GM23248 (cell line): ENCODE measurements at regions of chr1 and their contacts with region 1.

Region 1: GRCh38 chr1:180527101-180527669 is 24.8 kb upstream of the ACBD6 start:
- DNase-seq: peak; percentile 75
- H3K4me3 ChIP-seq: no peak overlapping the region
- H3K27ac ChIP-seq: no peak overlapping the region
- H3K4me1 ChIP-seq: peaks cover 12% of the 10 kb centered on the region
- H3K27me3 ChIP-seq: no peaks in the 10 kb centered on the region

Region 2: DNA sequence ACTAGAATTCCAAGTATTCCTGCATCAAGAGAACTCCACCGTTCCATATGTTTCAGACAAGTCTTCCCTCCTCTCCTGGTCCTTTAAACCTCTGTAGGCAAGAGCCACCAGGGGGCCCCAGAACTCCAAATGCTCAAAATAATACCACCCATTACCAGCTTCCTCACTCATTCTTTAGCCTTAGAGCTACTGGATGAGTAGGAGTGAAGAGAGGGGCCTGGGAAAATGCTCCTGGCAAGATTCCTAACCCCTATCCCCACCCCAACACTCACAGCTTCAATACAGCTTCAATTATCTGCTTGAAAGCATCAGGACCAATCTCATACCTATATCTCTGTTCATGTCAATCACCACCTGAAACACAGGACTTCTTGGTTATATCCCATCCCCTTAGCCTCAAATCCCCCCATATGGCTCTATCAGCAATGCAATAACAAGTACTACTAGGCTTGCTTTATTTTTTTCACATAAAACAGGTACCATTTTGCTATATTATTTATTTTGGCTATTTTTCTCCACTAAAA is 659.3 kb before region 1 on chr1:
- in situ Hi-C with region 1: no loop called
- DNase-seq: peak; percentile 78
- H3K4me3 ChIP-seq: no peak overlapping the region
- H3K27ac ChIP-seq: no peak overlapping the region
- H3K4me1 ChIP-seq: 0 out of 2 replicates have a peak, but pooled peaks cover 12% of the 10 kb centered on the region
- H3K27me3 ChIP-seq: no peaks in the 10 kb centered on the region

Region 3: DNA sequence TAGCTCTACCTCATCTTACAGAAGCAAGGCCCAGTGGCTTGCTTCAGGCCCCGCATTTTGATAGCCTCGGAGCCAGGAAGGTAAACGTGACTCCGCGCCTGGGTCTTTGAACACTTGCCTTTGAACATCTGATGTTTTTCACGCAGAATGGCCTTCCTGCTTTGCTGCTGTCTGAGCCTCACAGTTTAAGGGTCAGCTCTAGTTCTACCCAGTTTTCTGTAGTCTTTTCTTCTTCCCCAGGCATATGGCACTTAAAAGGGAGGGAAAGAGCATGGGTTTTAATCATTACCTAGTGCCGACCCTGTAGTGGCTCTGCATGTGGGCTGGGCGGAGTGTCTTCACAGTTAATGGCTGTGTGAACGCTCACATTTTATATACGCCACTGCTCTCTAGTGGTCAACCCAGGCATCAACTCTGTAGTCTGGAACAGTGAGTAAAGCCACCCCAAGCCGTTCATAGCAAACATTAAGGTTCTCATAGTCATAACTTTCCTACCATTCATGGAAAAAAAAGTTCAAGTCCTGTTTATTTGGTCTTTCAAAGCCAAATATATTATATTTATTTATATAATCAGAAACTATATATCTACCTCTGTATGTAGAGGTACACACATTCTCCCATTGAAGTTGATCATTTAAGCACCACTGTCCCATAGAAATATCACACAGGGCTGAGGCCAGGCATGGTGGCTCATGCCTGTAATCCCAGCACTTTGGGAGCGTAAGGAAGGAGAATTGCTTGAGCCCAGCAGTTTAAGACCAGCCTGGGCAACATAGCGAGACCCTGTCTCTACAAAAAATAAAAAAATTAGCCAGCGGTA is 639.4 kb after region 1 on chr1:
- in situ Hi-C with region 1: loop called (anchors 10 kb)
- DNase-seq: peak; percentile 87
- H3K4me3 ChIP-seq: no peak overlapping the region
- H3K27ac ChIP-seq: no peak overlapping the region
- H3K4me1 ChIP-seq: no peaks in the 10 kb centered on the region
- H3K27me3 ChIP-seq: no peaks in the 10 kb centered on the region